Heart left ventricle (tissue), 16 donors: ENCODE measurements at regions of chr2 and their contacts with region 1.

Region 1: GRCh38 chr2:171522052-171522787 is at the start of gene CYBRD1:
- DNase-seq: peak; percentile 84 to 93 (median 90)
- ATAC-seq: peak; percentile 65 to 90 (median 86)
- H3K4me3 ChIP-seq: peak within 1 kb of the TSS; percentile 78 to 97 (median 86)
- H3K27ac ChIP-seq: peak within 1 kb of the TSS; percentile 81 to 95 (median 92)
- H3K4me1 ChIP-seq: peaks cover 0 to 43% (median 20%) of the 10 kb centered on the region in 12 donors
- H3K27me3 ChIP-seq: no peaks in the 10 kb centered on the region
- CTCF ChIP-seq: peak in 1 of 12 donors; percentile 17
- POLR2A ChIP-seq: peak in 1 of 2 donors; percentile 75
- total RNA-seq, gene CYBRD1: 19.3 to 138 (median 49.9) TPM

Region 2: DNA sequence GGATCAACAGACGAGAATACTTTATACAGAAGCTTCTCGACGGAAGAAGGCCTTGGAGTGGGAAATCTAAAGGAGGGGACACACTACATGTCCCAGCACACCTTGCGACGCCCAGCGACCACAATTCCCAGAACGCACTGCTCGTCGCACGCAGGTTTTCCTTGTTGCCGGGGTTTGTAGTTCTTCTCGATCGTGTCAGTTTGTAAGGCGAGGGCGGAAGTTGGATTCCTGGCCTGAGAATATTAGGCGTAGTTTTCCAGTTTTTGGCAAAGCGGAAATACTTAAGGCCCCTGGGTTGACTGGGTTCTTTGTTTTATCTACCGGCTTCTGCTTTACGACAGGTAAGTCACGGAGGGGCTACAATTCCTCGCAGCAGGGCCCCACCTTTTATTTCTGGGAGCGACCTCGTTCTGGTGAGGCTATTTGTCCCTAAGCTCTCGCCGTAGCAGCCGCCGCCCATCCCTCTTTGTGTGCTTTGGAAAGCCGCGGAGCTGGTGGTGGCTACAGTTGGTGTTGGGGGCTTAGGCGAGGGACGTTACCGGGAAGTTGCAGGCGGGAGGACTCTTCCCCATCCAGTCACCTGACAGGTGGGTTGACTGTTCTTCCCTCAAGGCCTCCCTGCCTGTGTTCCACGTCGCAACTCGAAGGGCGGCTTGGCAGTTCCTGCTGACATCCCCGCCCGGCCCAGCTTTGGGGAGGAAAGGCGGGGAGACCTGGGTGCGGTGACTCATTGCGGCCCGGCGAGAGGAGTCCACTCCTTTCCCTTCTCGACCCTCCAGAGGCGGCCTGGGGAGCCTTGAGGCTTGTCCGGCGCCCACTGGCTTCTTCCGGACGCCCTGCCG is 165.3 kb after region 1 on chr2 and contains the start of gene DYNC1I2:
- intact Hi-C with region 1: loop called in 1 of 10 experiments (anchors 5 kb)
- DNase-seq: peak; percentile 91 to 95 (median 93)
- ATAC-seq: peak; percentile 98 to 99 (median 98)
- H3K4me3 ChIP-seq: peak within 1 kb of the TSS; percentile 64 to 92 (median 87)
- H3K27ac ChIP-seq: peak within 1 kb of the TSS; percentile 66 to 96 (median 90)
- H3K4me1 ChIP-seq: peaks cover 0 to 35% (median 15%) of the 10 kb centered on the region in 12 donors
- H3K27me3 ChIP-seq: peaks cover 0 to 2% (median 0%) of the 10 kb centered on the region in 9 donors
- CTCF ChIP-seq: no peak
- POLR2A ChIP-seq: no peak
- total RNA-seq, gene DYNC1I2: 66.7 to 92.9 (median 74.0) TPM